Common myeloid progenitor, CD34-positive (primary cell): ENCODE measurements at regions of chr10 and their contacts with region 1.

Region 1: DNA sequence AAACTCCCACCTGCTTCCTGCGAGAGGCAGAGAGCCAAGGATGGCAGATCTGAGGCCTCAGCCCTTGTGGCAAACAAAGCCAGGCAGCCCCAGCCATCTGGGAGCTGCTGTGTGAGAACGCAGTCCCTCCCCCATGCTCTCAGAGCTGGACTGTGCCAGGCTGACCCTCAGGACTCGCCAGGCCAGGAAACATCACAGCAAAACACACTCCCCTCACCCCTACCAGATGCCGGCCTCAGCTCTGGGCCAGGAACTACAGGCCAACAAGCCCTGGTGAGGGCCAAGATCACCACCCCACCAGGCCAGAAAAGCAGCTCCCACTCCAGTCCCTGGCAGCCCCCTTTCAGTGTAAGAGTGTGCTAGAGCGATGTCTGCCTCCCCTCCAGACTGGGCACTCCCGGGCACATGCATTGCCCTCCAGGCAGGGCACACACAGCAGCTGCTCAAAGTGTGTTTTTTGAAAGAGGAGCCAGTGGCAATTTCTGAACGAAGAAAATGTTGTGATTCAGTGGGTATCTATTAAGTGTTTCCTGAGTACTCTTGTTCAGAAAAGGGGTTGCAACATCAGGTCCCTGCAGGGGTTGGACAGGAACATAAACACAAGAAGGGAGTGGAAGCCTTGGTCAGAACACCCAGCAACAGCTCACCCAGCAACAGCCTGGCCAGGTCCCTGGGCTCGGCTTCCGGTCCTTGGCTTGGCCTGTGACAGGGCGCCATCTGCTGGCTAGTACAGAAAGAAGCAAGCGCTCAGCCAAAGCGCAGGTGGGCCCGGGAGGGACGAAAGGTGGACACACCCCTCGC is 18.3 kb downstream of the LRRC20 start:
- DNase-seq: peak; percentile 74 to 85 (median 84)
- H3K4me3 ChIP-seq: peak overlapping the region in 1 of 7 experiments; percentile 60
- H3K27ac ChIP-seq: no peak overlapping the region
- H3K4me1 ChIP-seq: peaks cover 0 to 11% (median 7%) of the 10 kb centered on the region in 4 experiments
- H3K27me3 ChIP-seq: peaks cover 0 to 5% (median 0%) of the 10 kb centered on the region in 5 experiments

Region 2: GRCh38 chr10:70227548-70228320 is 136.4 kb before region 1 on chr10:
- CTCF ChIA-PET with region 1: interaction called, 244 read pairs
- POLR2A ChIA-PET with region 1: no interaction called
- DNase-seq: no peak
- H3K4me3 ChIP-seq: no peak overlapping the region
- H3K27ac ChIP-seq: no peak overlapping the region
- H3K4me1 ChIP-seq: peaks cover 6 to 14% (median 11%) of the 10 kb centered on the region in 4 experiments
- H3K27me3 ChIP-seq: no peaks in the 10 kb centered on the region

Region 3: DNA sequence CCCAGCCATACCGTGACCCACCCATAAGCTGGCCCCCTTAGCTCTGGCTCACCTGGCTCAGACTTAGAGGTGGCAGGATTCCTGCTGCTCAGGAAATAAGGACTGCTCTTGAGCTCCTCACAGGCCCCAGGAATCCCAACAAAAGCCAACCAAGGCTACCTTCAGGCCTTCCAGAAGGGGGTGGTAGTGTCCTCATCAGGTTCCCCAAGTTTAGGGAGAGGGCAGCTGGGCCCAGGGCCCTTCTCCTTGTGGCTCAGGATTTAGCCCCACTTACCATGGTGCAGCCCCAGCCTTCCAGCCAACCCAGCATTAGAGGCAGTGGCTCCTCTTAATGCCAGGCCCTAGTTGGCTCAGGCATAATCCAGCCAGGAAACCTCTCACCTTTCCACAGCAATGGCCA is 103.9 kb before region 1 on chr10:
- CTCF ChIA-PET with region 1: interaction called, 18 read pairs
- POLR2A ChIA-PET with region 1: no interaction called
- DNase-seq: no peak
- H3K4me3 ChIP-seq: no peak overlapping the region
- H3K27ac ChIP-seq: no peak overlapping the region
- H3K4me1 ChIP-seq: peaks cover 0 to 11% (median 8%) of the 10 kb centered on the region in 4 experiments
- H3K27me3 ChIP-seq: peaks cover 3 to 54% (median 20%) of the 10 kb centered on the region in 5 experiments

Region 4: GRCh38 chr10:70272925-70273316 is 91.2 kb before region 1 on chr10:
- CTCF ChIA-PET with region 1: interaction called, 31 read pairs
- POLR2A ChIA-PET with region 1: no interaction called
- DNase-seq: peak; percentile 52 to 75 (median 72)
- H3K4me3 ChIP-seq: peak overlapping the region in 1 of 7 experiments; percentile 8
- H3K27ac ChIP-seq: no peak overlapping the region
- H3K4me1 ChIP-seq: peaks cover 0 to 2% (median 0%) of the 10 kb centered on the region in 4 experiments
- H3K27me3 ChIP-seq: peaks cover 0 to 19% (median 0%) of the 10 kb centered on the region in 5 experiments

Region 5: DNA sequence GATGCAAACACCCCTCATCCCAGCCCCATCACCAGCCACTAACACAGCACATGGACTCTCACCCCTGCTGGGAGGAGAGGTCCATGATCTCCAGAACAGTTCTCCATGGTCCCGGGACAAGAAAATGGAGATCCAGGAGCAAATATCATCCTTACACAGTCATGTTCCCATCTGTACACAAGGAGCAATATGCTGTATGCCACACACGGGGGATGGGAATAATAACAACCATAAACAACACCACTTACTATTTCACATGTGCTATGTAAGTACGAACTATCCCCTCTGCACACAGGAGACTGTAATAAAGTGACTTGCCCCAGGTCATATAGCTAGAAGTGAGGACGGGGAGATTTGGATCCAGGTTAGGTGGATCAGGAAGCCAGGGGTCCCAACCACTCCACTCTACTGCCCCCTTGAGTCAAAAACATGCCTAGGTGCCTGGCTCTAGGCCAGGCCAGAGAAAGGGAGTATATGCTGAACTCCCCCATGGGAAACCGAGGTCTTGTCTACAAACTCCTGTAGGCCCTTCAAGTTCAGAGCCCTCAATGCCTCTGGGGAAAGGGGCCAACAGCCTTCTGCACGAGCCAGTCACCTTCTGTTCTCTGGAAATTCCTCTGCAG is 15.8 kb before region 1 on chr10:
- CTCF ChIA-PET with region 1: interaction called, 72 read pairs
- POLR2A ChIA-PET with region 1: no interaction called
- DNase-seq: peak; percentile 30 to 60 (median 52)
- H3K4me3 ChIP-seq: no peak overlapping the region
- H3K27ac ChIP-seq: no peak overlapping the region
- H3K4me1 ChIP-seq: peaks cover 0 to 7% (median 0%) of the 10 kb centered on the region in 4 experiments
- H3K27me3 ChIP-seq: peaks cover 0 to 11% (median under 1%) of the 10 kb centered on the region in 5 experiments

Region 6: DNA sequence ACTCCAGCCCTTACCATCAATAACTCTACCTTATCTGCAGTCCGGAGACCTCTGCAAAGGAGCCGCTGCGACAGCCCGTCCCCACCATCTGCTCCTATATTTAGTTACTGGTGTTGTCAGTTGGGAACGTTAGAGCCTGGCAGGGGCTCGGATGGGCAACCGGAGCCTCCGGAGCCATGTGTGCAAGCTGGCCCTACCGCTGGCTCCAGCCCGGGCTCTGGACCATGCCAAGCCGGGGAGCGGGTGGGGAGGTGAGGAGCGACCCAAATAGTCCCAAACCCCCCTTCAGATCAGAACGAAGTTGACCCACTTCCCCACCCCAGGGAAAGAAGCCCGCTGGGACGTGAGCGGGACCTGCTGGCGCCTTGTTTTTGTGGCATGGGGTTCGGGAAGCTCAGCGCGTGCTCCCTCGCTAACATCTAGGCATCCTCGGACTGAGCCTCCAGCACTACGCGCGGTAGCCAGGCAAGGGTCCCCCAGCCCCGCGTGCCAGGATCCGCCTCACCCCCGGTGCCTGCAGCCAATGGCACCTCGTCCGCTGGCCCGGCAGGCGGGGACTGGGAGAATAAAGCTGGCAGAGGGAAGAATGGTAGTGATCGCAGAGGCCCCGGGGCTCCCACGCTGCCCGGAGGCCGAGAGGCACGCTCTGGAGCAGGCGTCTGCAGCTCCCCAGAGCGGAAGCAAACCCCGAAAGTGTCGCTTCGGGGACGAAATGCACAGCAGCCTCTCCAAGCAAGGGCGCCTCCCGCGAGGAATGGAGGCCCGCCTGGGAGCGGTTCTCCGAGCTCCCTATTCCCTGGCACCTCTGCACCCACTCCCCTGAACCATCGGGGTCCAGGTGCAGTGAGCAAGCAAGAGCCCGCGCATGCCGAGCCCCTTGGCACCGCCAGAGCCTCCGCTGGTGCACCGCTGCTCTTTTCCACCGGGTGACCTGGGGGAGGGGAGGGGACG is 17.6 kb after region 1 on chr10:
- CTCF ChIA-PET with region 1: interaction called, 22 read pairs
- POLR2A ChIA-PET with region 1: no interaction called
- DNase-seq: no peak
- H3K4me3 ChIP-seq: peak overlapping the region; percentile 59 to 82 (median 77)
- H3K27ac ChIP-seq: no peak overlapping the region
- H3K4me1 ChIP-seq: peaks cover 2 to 18% (median 14%) of the 10 kb centered on the region in 4 experiments
- H3K27me3 ChIP-seq: peaks cover 0 to 12% (median 0%) of the 10 kb centered on the region in 5 experiments

Region 7: GRCh38 chr10:70425096-70425495 is 60.9 kb after region 1 on chr10:
- CTCF ChIA-PET with region 1: no interaction called
- POLR2A ChIA-PET with region 1: no interaction called
- DNase-seq: no peak
- H3K4me3 ChIP-seq: no peak overlapping the region
- H3K27ac ChIP-seq: no peak overlapping the region
- H3K4me1 ChIP-seq: no peaks in the 10 kb centered on the region
- H3K27me3 ChIP-seq: no peaks in the 10 kb centered on the region